Activated B cell treated with CpG ODN at 0.5 μM for 24 hours (primary cell): ENCODE measurements at regions of chr10 and their contacts with region 1.

Region 1: DNA sequence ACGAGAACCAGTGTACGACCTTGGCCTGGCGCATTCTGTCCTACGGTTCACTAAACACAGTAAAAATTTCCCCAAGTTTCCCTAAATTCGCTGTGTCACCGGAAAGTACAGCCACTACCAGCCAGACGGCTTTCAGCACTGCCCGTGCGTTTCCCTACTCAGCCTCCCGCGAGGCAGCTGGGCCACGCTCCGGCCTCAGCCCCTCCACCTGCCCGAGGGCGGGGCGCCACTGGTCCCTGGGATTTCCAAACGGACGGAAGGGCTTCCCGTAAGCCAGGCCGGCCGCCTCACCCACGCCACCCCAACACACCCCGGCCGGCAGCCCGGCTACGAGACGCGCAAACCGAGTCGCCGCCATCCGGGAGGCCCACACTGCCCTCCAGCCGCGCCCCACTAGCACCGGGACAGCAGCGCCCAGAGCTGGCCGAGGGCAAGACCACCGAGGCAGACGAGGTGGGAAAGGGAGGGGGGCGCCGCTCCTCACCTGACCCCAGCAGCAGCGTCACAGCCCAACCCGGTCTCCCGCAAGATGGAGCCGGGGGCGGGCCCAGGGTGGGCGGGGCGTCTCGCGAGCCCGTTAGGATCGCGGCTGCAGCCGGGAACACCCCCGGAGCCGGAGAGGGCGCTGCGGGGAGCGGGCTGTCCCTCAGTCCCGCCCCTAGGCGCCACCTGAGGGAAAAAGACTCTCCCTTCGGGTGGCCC is at the start of gene ANXA7:
- DNase-seq: peak; percentile 86
- ATAC-seq: peak; percentile 93
- H3K4me3 Mint-ChIP-seq: peak within 1 kb of the TSS; percentile 92
- H3K27ac Mint-ChIP-seq: peak within 1 kb of the TSS; percentile 86
- H3K4me1 Mint-ChIP-seq: peaks cover 56% of the 10 kb centered on the region
- H3K27me3 Mint-ChIP-seq: no peaks in the 10 kb centered on the region
- CTCF ChIP-seq: no peak
- total RNA-seq, gene ANXA7: 150 TPM in 2 replicates

Region 2: GRCh38 chr10:71766702-71767419 is 1646.8 kb before region 1 on chr10:
- CTCF ChIA-PET with region 1: no interaction called
- POLR2A ChIA-PET with region 1: no interaction called
- intact Hi-C with region 1: loop called (anchors 5 kb)
- DNase-seq: no peak
- ATAC-seq: peak; percentile 16
- H3K4me3 Mint-ChIP-seq: peak overlapping the region; percentile 55
- H3K27ac Mint-ChIP-seq: peak overlapping the region; percentile 91
- H3K4me1 Mint-ChIP-seq: peaks cover 79% of the 10 kb centered on the region
- H3K27me3 Mint-ChIP-seq: no peaks in the 10 kb centered on the region
- CTCF ChIP-seq: no peak

Region 3: GRCh38 chr10:73209705-73210104 is 204.0 kb before region 1 on chr10:
- CTCF ChIA-PET with region 1: no interaction called
- POLR2A ChIA-PET with region 1: no interaction called
- intact Hi-C with region 1: no loop called
- DNase-seq: no peak
- ATAC-seq: no peak
- H3K4me3 Mint-ChIP-seq: no peak overlapping the region
- H3K27ac Mint-ChIP-seq: no peak overlapping the region
- H3K4me1 Mint-ChIP-seq: no peaks in the 10 kb centered on the region
- H3K27me3 Mint-ChIP-seq: no peaks in the 10 kb centered on the region
- CTCF ChIP-seq: no peak

Region 4: GRCh38 chr10:73246783-73247508 is 166.7 kb before region 1 on chr10 and contains the start of gene DNAJC9:
- CTCF ChIA-PET with region 1: no interaction called
- POLR2A ChIA-PET with region 1: interaction called, 8 read pairs
- intact Hi-C with region 1: loop called (anchors 1 kb)
- DNase-seq: peak; percentile 99
- ATAC-seq: peak; percentile 84
- H3K4me3 Mint-ChIP-seq: peak within 1 kb of the TSS; percentile 93
- H3K27ac Mint-ChIP-seq: peak within 1 kb of the TSS; percentile 93
- H3K4me1 Mint-ChIP-seq: peaks cover 56% of the 10 kb centered on the region
- H3K27me3 Mint-ChIP-seq: no peaks in the 10 kb centered on the region
- CTCF ChIP-seq: no peak
- total RNA-seq, gene DNAJC9: 22.8 and 24.4 TPM in 2 replicates

Region 5: DNA sequence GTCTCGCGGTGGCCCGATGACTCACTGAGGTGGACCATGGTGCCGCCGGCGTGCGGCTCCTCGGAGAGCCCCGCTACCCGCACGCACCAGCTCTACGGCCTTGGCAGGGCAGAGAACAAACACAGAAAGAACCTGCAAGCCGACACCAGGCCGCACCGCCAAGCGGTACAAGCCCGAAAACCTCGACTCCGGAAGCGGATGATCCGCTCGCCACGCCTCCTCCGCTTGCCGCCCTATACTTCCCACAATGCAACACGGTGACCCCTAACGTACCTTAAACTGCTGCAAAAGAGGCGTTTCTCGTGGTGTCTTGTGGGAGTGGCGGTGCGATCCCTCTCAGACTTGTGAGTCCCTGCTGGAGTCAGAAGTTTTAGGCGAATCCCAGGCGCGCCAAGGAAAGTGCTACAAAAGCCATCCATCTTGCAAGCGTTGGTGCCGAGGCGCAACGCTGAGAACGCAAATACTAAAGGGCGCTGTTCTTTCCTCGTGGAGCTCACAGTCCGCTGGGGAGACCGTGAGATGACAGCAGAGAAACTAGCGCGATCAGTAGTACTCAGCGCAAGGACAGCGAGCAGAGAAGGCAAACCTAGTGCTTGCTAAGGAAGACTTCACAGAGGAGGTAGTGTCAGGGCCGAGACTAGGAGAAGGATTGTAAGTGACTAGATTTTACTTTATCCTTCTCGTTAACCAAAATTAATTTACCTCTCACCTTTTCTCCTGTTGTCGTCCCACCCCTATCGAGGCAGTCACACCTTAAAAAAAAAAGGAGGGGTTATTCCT is 161.0 kb before region 1 on chr10 and contains the start of gene MRPS16:
- CTCF ChIA-PET with region 1: no interaction called
- POLR2A ChIA-PET with region 1: interaction called, 8 read pairs
- intact Hi-C with region 1: loop called (anchors 1 kb)
- DNase-seq: peak; percentile 84
- ATAC-seq: peak; percentile 89
- H3K4me3 Mint-ChIP-seq: peak within 1 kb of the TSS; percentile 99
- H3K27ac Mint-ChIP-seq: peak within 1 kb of the TSS; percentile 95
- H3K4me1 Mint-ChIP-seq: peaks cover 44% of the 10 kb centered on the region
- H3K27me3 Mint-ChIP-seq: no peaks in the 10 kb centered on the region
- CTCF ChIP-seq: no peak
- total RNA-seq, gene MRPS16: 85.9 and 88.5 TPM in 2 replicates

Region 6: DNA sequence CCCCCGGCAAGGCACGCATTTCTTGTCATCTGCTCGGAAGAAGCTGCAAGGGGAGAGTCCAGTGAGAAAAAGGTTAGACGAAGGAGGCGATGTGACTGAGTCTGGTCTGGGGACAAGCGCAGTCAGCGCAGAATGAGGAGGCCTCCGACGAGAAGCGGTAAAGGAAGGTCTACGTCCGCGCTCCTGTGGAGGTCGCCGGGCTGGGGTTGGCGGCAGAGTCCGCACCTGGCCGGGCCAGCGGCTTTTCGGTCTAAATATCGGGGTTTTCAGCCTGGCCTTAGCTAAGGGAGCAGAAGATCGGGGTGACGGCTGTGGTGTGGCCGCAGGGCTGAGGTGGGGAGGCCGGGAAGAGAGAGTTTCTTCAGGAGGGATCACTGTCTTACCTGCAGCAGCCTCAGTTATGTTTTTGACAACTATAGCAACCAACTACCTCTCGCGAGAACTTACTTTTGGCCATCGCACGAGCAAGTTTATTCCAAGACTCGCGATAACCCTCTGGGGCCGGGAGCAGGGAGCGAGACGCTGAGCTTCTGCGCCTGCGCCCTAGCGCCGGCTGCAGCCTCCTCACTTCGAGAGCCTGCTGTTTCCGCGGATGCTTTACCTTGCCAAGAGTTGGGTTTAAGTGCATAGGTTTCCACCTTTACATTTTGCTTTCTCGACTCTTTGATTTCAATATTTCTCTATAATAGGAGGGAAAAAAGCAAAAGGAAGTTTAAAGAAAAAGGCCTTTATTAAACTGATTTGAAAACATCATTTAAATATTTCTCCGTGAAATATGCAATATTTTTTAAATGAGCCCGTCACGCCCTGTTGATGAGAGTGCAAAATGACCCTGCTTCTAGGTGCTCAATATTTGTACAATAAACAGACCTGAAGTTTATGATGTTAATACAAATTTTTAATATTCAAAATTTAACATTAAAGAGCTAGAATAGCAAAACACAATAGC is 55.1 kb before region 1 on chr10 and contains the start of gene CFAP70:
- CTCF ChIA-PET with region 1: no interaction called
- POLR2A ChIA-PET with region 1: interaction called, 6 read pairs
- intact Hi-C with region 1: loop called (anchors 1 kb)
- DNase-seq: peak; percentile 77
- ATAC-seq: peak; percentile 98
- H3K4me3 Mint-ChIP-seq: peak within 1 kb of the TSS; percentile 97
- H3K27ac Mint-ChIP-seq: peak within 1 kb of the TSS; percentile 91
- H3K4me1 Mint-ChIP-seq: peaks cover 14% of the 10 kb centered on the region
- H3K27me3 Mint-ChIP-seq: peaks cover 2% of the 10 kb centered on the region
- CTCF ChIP-seq: no peak
- total RNA-seq, gene CFAP70: 1.2 and 1.7 TPM in 2 replicates